WTC11 (cell line): ENCODE measurements at regions of chr15 and their contacts with region 1.

Region 1: GRCh38 chr15:90143166-90143655 is 40.9 kb upstream of the IDH2 start:
- DNase-seq: peak; percentile 92
- ATAC-seq: peak; percentile 99
- H3K4me3 Mint-ChIP-seq: no peak overlapping the region
- H3K27ac Mint-ChIP-seq: no peak overlapping the region
- H3K4me1 Mint-ChIP-seq: peaks cover 10% of the 10 kb centered on the region
- H3K27me3 Mint-ChIP-seq: peaks cover 5% of the 10 kb centered on the region; the same call in 1 of the 2 replicates
- CTCF ChIP-seq: peak; percentile 62; the same call in 1 of the 2 replicates

Region 2: DNA sequence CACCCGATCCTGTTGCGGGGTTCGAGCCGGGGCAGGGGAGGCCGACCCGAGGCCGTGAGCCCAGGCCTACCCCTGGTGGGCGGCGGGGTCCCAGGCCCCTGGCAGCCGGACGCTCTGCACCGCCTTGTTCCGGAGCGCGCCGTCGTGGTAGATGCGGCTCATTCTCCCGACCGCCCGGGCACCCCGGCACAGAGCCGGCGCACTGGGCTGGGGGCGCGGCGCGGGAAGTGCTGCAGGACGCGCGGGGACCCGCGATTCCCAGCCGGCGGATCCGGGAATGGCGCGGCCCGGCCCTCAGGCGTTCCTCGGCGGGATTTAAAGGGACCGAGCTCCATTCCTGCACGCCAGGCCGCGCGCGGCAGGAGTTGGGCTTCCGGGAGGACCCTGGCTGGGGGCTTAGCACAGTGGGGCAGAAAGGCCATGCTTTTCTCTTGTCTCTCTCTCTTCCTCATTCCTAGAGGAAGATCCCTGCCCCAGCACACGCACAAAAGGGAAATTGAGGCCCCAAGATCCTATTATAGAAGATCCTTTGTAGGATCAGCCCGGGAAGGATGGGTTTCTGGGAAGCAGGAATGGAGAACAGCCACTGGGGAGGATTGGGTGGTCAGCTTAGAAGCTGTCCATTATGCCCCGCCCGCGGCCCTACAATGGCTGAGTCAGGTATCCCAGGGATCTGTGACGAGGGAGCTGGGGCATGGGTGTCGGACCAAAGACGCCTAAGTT is 230.4 kb before region 1 on chr15 and contains the start of gene ARPIN:
- CTCF ChIA-PET with region 1: no interaction called
- POLR2A ChIA-PET with region 1: no interaction called
- DNase-seq: peak; percentile 72
- ATAC-seq: peak; percentile 80
- H3K4me3 Mint-ChIP-seq: peak within 1 kb of the TSS; percentile 72
- H3K27ac Mint-ChIP-seq: no peak within 1 kb of the TSS
- H3K4me1 Mint-ChIP-seq: peaks cover 12% of the 10 kb centered on the region
- H3K27me3 Mint-ChIP-seq: peaks cover 21% of the 10 kb centered on the region
- CTCF ChIP-seq: no peak
- total RNA-seq, gene ARPIN: 3.5 to 4.8 TPM (median 4.7 TPM) in 3 replicates

Region 3: GRCh38 chr15:90059208-90059985 is 83.8 kb before region 1 on chr15:
- CTCF ChIA-PET with region 1: no interaction called
- POLR2A ChIA-PET with region 1: no interaction called
- DNase-seq: peak; percentile 59
- ATAC-seq: peak; percentile 60
- H3K4me3 Mint-ChIP-seq: no peak overlapping the region; the same call in 1 of the 2 replicates
- H3K27ac Mint-ChIP-seq: peak overlapping the region; percentile 92
- H3K4me1 Mint-ChIP-seq: peaks cover 71% of the 10 kb centered on the region
- H3K27me3 Mint-ChIP-seq: no peaks in the 10 kb centered on the region; the same call in 1 of the 2 replicates
- CTCF ChIP-seq: no peak

Region 4: GRCh38 chr15:90101969-90102890 is 41.0 kb before region 1 on chr15 and contains the start of gene IDH2:
- CTCF ChIA-PET with region 1: interaction called, 15 read pairs
- POLR2A ChIA-PET with region 1: no interaction called
- DNase-seq: peak; percentile 82
- ATAC-seq: peak; percentile 91
- H3K4me3 Mint-ChIP-seq: peak within 1 kb of the TSS; percentile 79
- H3K27ac Mint-ChIP-seq: no peak within 1 kb of the TSS
- H3K4me1 Mint-ChIP-seq: peaks cover 42% of the 10 kb centered on the region
- H3K27me3 Mint-ChIP-seq: peaks cover 41% of the 10 kb centered on the region
- CTCF ChIP-seq: no peak
- total RNA-seq, gene IDH2: 53.3 to 80.3 TPM (median 72.3 TPM) in 3 replicates

Region 5: GRCh38 chr15:90201130-90201949 is 58.1 kb after region 1 on chr15 and contains the start of gene SEMA4B:
- CTCF ChIA-PET with region 1: interaction called, 24 read pairs
- POLR2A ChIA-PET with region 1: no interaction called
- DNase-seq: peak; percentile 83
- ATAC-seq: peak; percentile 86
- H3K4me3 Mint-ChIP-seq: peak within 1 kb of the TSS; percentile 78
- H3K27ac Mint-ChIP-seq: peak within 1 kb of the TSS; percentile 60
- H3K4me1 Mint-ChIP-seq: peaks cover 20% of the 10 kb centered on the region
- H3K27me3 Mint-ChIP-seq: no peaks in the 10 kb centered on the region; the same call in 1 of the 2 replicates
- CTCF ChIP-seq: no peak
- total RNA-seq, gene SEMA4B: 50.1 to 53.3 TPM (median 50.2 TPM) in 3 replicates

Region 6: GRCh38 chr15:90233376-90234095 is 90.3 kb after region 1 on chr15 and contains the start of gene CIB1:
- CTCF ChIA-PET with region 1: interaction called, 46 read pairs
- POLR2A ChIA-PET with region 1: interaction called, 4 read pairs
- DNase-seq: peak; percentile 95
- ATAC-seq: peak; percentile 90
- H3K4me3 Mint-ChIP-seq: peak within 1 kb of the TSS; percentile 72
- H3K27ac Mint-ChIP-seq: peak within 1 kb of the TSS; percentile 25
- H3K4me1 Mint-ChIP-seq: peaks cover 16% of the 10 kb centered on the region
- H3K27me3 Mint-ChIP-seq: no peaks in the 10 kb centered on the region
- CTCF ChIP-seq: no peak
- total RNA-seq, gene CIB1: 26.1 to 29.6 TPM (median 26.9 TPM) in 3 replicates